Heart left ventricle (tissue), 16 donors: ENCODE measurements at regions of chr12 and their contacts with region 1.

Region 1: GRCh38 chr12:76031537-76032073 is at the start of gene PHLDA1:
- DNase-seq: peak; percentile 96 to 97 (median 97)
- ATAC-seq: peak; percentile 91 to 95 (median 94)
- H3K4me3 ChIP-seq: peak within 1 kb of the TSS; percentile 65 to 90 (median 80)
- H3K27ac ChIP-seq: peak within 1 kb of the TSS; percentile 89 to 99 (median 96)
- H3K4me1 ChIP-seq: peaks cover 0 to 35% (median 17%) of the 10 kb centered on the region in 12 donors
- H3K27me3 ChIP-seq: no peaks in the 10 kb centered on the region
- CTCF ChIP-seq: peak; percentile 54 to 78 (median 64)
- POLR2A ChIP-seq: peak in 1 of 2 donors; percentile 91
- total RNA-seq, gene PHLDA1: 4.2 to 44.4 (median 8.3) TPM

Region 2: GRCh38 chr12:75334384-75335030 is 697.1 kb before region 1 on chr12 and contains the start of gene GLIPR1L1:
- intact Hi-C with region 1: loop called in 1 of 10 experiments (anchors 10 kb)
- DNase-seq: peak; percentile 84 to 90 (median 87)
- ATAC-seq: peak; percentile 81 to 89 (median 87)
- H3K4me3 ChIP-seq: peak within 1 kb of the TSS in 11 of 12 donors; percentile 17 to 59 (median 47)
- H3K27ac ChIP-seq: peak within 1 kb of the TSS in 3 of 12 donors; percentile 10 to 29 (median 24)
- H3K4me1 ChIP-seq: peaks cover 0 to 14% (median 5%) of the 10 kb centered on the region in 12 donors
- H3K27me3 ChIP-seq: no peaks in the 10 kb centered on the region
- CTCF ChIP-seq: peak; percentile 78 to 98 (median 90)
- POLR2A ChIP-seq: no peak
- total RNA-seq, gene GLIPR1L1: not detected

Region 3: GRCh38 chr12:75553398-75553797 is 478.2 kb before region 1 on chr12:
- intact Hi-C with region 1: loop called in 5 of 10 experiments (anchors 10 kb)
- DNase-seq: peak in 1 of 5 donors; percentile 23
- ATAC-seq: peak; percentile 64 to 89 (median 78)
- H3K4me3 ChIP-seq: no peak overlapping the region
- H3K27ac ChIP-seq: peak overlapping the region in 7 of 12 donors; percentile 2 to 81 (median 43)
- H3K4me1 ChIP-seq: peaks cover 0 to 37% (median 12%) of the 10 kb centered on the region in 12 donors
- H3K27me3 ChIP-seq: no peaks in the 10 kb centered on the region
- CTCF ChIP-seq: no peak
- POLR2A ChIP-seq: no peak

Region 4: DNA sequence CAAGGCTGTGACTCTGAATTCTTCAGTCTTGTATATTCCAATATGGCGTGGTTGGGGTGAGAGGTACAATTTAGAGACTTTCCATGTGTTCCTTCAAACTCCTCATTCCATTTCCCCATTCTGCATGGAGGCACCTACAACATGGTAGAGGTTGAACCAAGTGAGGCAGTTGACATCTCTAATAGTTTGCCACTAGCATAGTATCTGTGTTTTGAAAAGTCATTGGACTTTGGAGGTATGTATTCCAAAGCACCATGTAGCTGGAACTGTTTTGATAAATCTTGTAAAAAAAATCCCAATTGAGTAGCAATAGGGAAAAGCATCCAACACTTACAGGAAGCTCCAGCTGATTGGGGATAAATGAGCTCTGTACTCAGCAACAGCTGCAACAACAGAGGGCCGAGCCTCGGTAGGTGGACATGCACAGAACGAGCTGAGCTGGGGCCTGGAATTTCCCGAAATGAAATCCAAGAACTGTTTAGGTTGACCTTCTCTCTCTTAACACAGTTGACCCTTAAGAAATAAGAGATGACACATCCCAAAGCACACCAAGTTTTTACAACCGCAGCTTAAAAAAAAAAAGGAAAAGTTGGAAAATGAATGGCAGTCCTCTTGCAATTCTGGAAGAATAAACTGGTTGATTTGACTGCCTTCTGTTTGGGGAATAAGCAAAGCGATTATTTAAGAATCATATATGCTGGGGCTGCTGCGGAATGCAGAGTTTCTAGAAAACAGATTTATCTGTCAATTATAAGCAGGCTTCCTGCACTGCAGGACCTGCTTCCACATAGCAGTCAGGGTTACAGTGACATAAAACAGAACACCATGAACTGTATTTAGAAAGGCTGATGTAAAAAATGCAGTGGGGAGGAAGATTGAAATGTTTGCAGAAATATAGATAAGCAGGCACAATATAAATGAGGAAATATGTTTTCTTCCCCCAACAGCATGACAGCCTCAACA is 325.6 kb before region 1 on chr12:
- intact Hi-C with region 1: loop called in 5 of 10 experiments (anchors 5 kb)
- DNase-seq: peak; percentile 52 to 70 (median 66)
- ATAC-seq: peak; percentile 85 to 89 (median 86)
- H3K4me3 ChIP-seq: peak overlapping the region in 1 of 12 donors; percentile 12
- H3K27ac ChIP-seq: peak overlapping the region; percentile 31 to 86 (median 74)
- H3K4me1 ChIP-seq: peaks cover 0 to 53% (median 44%) of the 10 kb centered on the region in 12 donors
- H3K27me3 ChIP-seq: no peaks in the 10 kb centered on the region
- CTCF ChIP-seq: no peak
- POLR2A ChIP-seq: no peak

Region 5: GRCh38 chr12:75820848-75821578 is 210.6 kb before region 1 on chr12:
- intact Hi-C with region 1: loop called in 6 of 10 experiments (anchors 5 to 10 kb)
- DNase-seq: peak in 4 of 5 donors; percentile 38 to 62 (median 50)
- ATAC-seq: peak; percentile 52 to 87 (median 66)
- H3K4me3 ChIP-seq: peak overlapping the region in 1 of 12 donors; percentile 12
- H3K27ac ChIP-seq: peak overlapping the region in 3 of 12 donors; percentile 1 to 28 (median 26)
- H3K4me1 ChIP-seq: peaks cover 0 to 7% (median 0%) of the 10 kb centered on the region in 12 donors
- H3K27me3 ChIP-seq: no peaks in the 10 kb centered on the region
- CTCF ChIP-seq: peak in 1 of 12 donors; percentile 22
- POLR2A ChIP-seq: no peak

Region 6: DNA sequence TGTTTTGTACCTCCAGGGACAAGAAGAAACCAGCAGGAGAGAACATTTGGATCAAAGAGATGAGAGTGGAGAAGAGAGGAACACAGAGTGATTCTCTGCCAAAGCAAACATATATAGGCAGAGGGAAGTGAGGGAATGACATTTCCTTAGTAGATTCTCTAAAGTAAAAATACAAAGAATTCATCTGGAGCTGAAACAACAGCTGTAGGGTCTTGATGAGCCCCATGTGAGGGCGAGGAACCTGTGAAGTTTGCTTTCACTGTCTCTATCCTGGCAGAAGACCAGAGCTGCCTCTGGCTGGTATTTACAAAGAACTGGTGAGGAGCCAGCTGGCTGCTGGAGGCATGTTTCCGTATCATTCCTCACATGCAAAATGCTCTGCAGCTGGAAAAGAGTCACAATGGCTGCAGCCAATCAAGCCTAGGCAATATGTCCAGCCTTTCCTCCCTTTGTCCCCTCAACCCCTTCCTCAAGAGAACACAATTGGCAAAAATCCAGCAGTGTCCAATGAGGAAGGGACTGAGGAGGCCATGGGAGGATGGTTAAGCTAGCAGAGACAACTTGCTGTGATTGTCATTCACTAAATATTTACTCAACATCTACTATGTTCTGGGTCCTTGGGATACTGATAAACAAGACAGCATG is 122.5 kb before region 1 on chr12:
- intact Hi-C with region 1: loop called in 4 of 10 experiments (anchors 2 to 10 kb)
- DNase-seq: peak; percentile 65 to 90 (median 81)
- ATAC-seq: peak; percentile 69 to 84 (median 78)
- H3K4me3 ChIP-seq: no peak overlapping the region
- H3K27ac ChIP-seq: peak overlapping the region in 11 of 12 donors; percentile 22 to 64 (median 54)
- H3K4me1 ChIP-seq: peaks cover 0 to 41% (median 23%) of the 10 kb centered on the region in 12 donors
- H3K27me3 ChIP-seq: no peaks in the 10 kb centered on the region
- CTCF ChIP-seq: no peak
- POLR2A ChIP-seq: no peak

Region 7: GRCh38 chr12:75977952-75978671 is 53.5 kb before region 1 on chr12:
- intact Hi-C with region 1: loop called in 2 of 10 experiments (anchors 5 kb)
- DNase-seq: peak in 4 of 5 donors; percentile 44 to 85 (median 73)
- ATAC-seq: peak; percentile 74 to 98 (median 96)
- H3K4me3 ChIP-seq: no peak overlapping the region
- H3K27ac ChIP-seq: peak overlapping the region; percentile 16 to 89 (median 72)
- H3K4me1 ChIP-seq: peaks cover 0 to 81% (median 30%) of the 10 kb centered on the region in 12 donors
- H3K27me3 ChIP-seq: no peaks in the 10 kb centered on the region
- CTCF ChIP-seq: no peak
- POLR2A ChIP-seq: peak in 1 of 2 donors; percentile 18

Region 8: GRCh38 chr12:76374386-76375020 is 342.9 kb after region 1 on chr12:
- intact Hi-C with region 1: no loop called
- DNase-seq: no peak
- ATAC-seq: no peak
- H3K4me3 ChIP-seq: no peak overlapping the region
- H3K27ac ChIP-seq: no peak overlapping the region
- H3K4me1 ChIP-seq: no peaks in the 10 kb centered on the region
- H3K27me3 ChIP-seq: no peaks in the 10 kb centered on the region
- CTCF ChIP-seq: no peak
- POLR2A ChIP-seq: no peak